AG04450 (cell line): ENCODE measurements at regions of chr5 and their contacts with region 1.

Region 1: DNA sequence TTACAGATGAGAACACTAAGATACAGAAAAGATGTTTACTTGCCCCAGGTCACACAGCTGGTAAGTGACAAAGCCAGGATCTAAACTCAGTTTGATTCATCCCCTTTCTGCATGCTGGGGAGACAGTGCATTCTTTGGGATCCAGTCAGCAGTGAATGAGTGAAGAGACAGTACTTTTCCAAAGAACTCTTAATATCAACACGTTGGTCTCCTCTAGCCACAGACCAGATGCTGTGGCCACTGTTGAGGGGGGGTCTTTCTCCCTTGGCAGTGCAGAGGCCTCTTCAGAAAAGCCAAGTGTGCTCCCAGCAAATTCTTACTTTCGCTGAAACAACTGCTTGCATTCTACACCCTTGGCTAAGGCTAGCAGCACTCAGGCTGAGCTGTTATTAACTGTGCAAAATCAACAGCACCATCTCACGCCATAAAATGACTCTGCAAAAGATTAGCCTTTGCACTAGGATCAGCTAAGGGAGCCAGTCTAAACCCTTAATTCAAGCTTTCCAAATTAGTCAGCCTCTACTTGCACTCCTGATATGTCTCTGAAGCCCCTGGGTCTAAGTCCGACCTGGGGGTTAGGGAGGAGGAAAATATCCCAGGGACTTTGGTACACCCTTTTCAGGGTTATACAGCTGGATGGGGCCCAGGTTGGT is 4.8 kb upstream of the TMEM171 start:
- DNase-seq: peak; percentile 93
- H3K4me3 ChIP-seq: no peak overlapping the region
- H3K27ac ChIP-seq: peak overlapping the region; percentile 62
- H3K27me3 ChIP-seq: no peaks in the 10 kb centered on the region
- CTCF ChIP-seq: no peak

Region 2: GRCh38 chr5:72760259-72760658 is 355.3 kb before region 1 on chr5:
- CTCF ChIA-PET with region 1: no interaction called
- POLR2A ChIA-PET with region 1: no interaction called
- DNase-seq: no peak
- H3K4me3 ChIP-seq: no peak overlapping the region
- H3K27ac ChIP-seq: no peak overlapping the region
- H3K27me3 ChIP-seq: no peaks in the 10 kb centered on the region
- CTCF ChIP-seq: no peak

Region 3: GRCh38 chr5:72985719-72986118 is 129.8 kb before region 1 on chr5:
- CTCF ChIA-PET with region 1: interaction called, 10 read pairs
- POLR2A ChIA-PET with region 1: no interaction called
- DNase-seq: no peak
- H3K4me3 ChIP-seq: no peak overlapping the region
- H3K27ac ChIP-seq: no peak overlapping the region
- H3K27me3 ChIP-seq: no peaks in the 10 kb centered on the region
- CTCF ChIP-seq: no peak

Region 4: DNA sequence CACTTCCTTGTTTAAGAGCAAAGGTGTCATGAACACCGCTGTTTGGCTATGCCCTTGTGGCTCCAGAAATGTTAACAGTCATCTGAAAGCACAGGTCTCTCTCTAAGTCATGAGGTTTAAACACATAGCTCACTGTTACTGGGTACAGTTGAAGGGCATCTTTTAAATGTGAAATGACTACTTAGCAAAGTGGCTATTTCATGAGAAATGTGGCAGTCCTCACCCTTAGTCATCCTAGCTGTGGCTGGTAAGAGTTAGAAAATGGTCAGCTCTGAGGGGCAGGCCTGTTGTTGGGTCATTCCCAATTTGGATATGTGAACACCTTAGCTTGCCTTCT is 19.3 kb before region 1 on chr5:
- CTCF ChIA-PET with region 1: no interaction called
- POLR2A ChIA-PET with region 1: no interaction called
- DNase-seq: no peak
- H3K4me3 ChIP-seq: no peak overlapping the region
- H3K27ac ChIP-seq: no peak overlapping the region
- H3K27me3 ChIP-seq: no peaks in the 10 kb centered on the region
- CTCF ChIP-seq: no peak